Sciatic nerve (tissue), 2 donors: ENCODE measurements at regions of chr22 and their contacts with region 1.

Region 1: GRCh38 chr22:37933711-37934376 is 19.6 kb downstream of the C22orf23 start:
- DNase-seq: peak; percentile 89
- ATAC-seq: peak; percentile 94

Region 2: DNA sequence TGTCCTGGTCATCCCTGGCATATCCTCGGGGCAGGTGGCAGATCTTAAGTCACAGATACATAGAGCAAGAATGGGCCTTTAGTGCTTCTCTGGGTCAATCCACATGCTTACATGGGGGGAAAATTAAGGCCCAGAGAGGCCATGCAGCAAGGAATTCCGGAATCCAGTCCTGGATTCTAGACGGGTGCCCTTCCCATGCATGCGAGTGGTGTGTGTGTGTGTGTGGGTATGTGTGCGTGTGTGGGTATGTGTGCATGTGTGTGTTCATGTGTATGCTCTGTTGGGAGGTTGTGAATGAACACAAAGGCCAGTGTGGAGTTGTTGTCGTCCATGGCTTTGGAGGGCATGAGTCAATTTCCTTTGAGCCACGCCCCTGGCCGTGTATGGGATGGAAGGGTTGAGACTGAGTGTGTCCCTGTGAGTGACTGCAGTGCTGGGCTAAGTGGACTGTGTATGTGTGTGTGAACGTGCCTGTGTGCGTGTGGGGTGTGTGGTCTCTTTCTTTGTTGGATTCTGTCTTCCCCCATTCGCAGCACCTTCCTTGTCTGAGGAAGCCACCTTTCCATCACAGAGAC is 1371.5 kb before region 1 on chr22:
- intact Hi-C with region 1: no loop called
- DNase-seq: no peak
- ATAC-seq: no peak

Region 3: DNA sequence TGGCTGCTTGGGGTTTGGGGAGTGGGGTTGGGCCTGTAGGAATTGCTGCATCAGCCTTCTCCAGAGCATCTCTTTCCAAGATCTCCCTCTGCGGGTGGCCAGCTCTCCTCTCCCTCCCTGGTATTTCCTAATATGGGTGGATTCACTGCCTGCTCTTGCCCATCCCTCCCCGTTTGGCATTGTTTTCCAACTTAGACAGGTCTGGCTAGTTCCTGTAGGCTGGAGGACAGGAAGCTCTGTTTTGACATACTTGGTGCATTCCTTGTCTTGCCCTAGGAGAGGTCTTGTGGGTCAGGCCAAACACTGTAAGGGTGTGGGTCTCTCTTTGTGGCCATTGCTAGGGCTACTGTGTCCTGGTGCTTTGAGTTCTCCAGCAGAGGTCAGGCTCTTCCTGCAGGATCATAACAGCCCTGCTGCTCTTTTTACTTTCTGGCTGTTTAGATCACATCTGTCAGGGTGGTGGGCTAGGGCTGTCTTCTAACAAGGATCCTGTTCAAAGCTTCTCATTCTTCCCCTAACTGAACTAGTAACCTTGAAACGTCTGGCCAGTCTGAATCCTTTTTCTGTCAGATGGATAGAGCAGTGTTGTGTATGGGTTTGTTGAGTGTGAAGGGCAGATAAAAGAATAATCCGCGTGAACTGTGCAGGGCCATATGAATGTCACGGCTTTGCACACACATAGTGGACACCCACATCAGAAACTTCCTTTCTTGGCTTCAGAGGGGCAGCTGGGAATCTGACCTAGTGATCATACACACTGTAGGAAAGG is 46.0 kb before region 1 on chr22:
- intact Hi-C with region 1: loop called (anchors 10 kb)
- DNase-seq: peak; percentile 74
- ATAC-seq: peak; percentile 93